Breast epithelium (tissue), 4 donors: ENCODE measurements at regions of chr6 and their contacts with region 1.

Region 1: DNA sequence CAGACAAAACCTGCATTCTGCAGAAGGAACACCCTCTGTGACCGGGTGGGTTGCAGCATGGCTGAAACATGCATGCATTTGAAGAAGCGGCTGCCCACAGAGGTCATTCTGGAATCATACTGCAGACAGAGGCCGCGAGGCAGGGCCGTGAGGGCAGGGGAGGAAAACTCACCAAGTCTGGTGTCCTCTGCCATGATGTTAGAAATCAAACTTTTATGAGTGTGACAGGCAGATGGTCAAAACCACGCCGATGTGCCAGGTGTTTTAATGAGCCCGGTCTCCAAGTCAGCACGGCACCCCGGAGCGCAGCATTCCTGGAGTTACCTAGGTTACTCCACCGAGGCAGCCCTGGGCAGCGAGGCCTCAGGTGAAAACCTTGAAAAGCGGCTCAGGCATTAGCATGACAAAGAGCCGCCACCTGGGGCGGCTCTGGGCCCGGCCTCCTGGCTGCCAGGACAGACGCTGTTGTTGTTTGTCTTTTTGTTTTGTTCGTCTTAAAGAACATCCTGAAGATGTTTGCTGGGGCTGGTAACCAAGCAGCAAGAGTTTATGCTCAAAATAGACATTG is 255.6 kb downstream of the ERMARD start:
- DNase-seq: no peak
- H3K4me3 ChIP-seq: no peak overlapping the region
- H3K27ac ChIP-seq: no peak overlapping the region
- H3K4me1 ChIP-seq: peaks cover 6 to 8% of the 10 kb centered on the region in 2 donors
- H3K27me3 ChIP-seq: no peaks in the 10 kb centered on the region
- CTCF ChIP-seq: no peak
- POLR2A ChIP-seq: no peak

Region 2: GRCh38 chr6:168451805-168452517 is 1555.0 kb before region 1 on chr6:
- intact Hi-C with region 1: no loop called
- DNase-seq: no peak
- H3K4me3 ChIP-seq: no peak overlapping the region
- H3K27ac ChIP-seq: peak overlapping the region in 1 of 2 donors; percentile 4
- H3K4me1 ChIP-seq: no peaks in the 10 kb centered on the region
- H3K27me3 ChIP-seq: no peaks in the 10 kb centered on the region
- CTCF ChIP-seq: peak in 1 of 3 donors; percentile 24
- POLR2A ChIP-seq: no peak

Region 3: GRCh38 chr6:168934660-168935627 is 1072.0 kb before region 1 on chr6:
- intact Hi-C with region 1: loop called (anchors 5 kb)
- DNase-seq: no peak
- H3K4me3 ChIP-seq: no peak overlapping the region
- H3K27ac ChIP-seq: no peak overlapping the region
- H3K4me1 ChIP-seq: no peaks in the 10 kb centered on the region
- H3K27me3 ChIP-seq: no peaks in the 10 kb centered on the region
- CTCF ChIP-seq: no peak
- POLR2A ChIP-seq: no peak

Region 4: DNA sequence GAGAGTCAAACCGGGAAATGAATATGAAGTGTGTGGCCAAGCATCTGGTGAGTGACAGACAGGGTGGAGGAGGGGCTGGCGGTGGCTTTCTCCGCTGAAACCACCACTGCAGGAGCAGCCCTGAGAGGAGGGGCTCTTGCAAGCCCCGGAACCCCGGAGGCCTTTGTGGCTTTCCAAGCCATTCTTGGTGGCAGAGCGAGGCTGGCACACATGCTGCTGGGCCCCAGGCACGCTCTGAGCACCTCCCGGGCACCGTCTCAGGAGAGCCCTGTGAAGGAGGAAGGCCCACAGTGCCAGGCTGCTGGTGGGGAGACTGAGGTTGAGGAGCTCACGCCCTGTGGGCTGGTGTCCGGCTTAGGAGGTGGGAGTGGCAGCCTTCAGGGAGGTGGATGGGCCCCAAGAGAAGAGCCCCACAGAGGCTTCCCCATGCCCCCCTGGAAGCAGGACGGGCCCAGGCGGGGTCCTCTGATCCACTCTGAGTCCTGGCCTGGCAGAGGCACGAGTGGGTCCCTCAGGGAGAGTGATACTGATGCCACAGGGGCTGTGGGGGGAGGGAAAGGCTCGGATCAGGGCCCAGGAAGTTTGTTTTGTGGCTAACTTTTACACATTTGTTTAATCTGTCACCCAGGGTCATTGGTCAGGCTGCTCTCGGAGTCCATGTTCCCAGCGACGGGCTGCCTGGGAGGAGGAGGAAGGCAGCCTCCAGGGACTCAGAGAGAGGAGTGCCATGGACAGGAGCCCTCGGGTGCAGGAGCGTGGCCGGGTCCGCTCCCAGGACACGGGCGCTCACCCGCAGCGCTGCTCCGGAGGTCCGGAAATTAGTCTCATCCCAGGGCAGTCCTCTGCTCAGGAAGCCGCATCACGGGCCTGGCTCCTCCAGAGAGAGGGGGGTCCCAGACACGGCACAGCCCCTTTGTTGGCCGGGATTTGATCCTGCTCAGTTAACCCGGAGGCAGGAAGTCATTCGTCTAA is 84.8 kb before region 1 on chr6:
- intact Hi-C with region 1: no loop called
- DNase-seq: no peak
- H3K4me3 ChIP-seq: no peak overlapping the region
- H3K27ac ChIP-seq: no peak overlapping the region
- H3K4me1 ChIP-seq: no peaks in the 10 kb centered on the region
- H3K27me3 ChIP-seq: no peaks in the 10 kb centered on the region
- CTCF ChIP-seq: no peak
- POLR2A ChIP-seq: no peak